Activated CD4-positive, alpha-beta T cell treated with anti-CD3 and anti-CD28 coated beads for 36 hours (primary cell): ENCODE measurements at regions of chr2 and their contacts with region 1.

Region 1: DNA sequence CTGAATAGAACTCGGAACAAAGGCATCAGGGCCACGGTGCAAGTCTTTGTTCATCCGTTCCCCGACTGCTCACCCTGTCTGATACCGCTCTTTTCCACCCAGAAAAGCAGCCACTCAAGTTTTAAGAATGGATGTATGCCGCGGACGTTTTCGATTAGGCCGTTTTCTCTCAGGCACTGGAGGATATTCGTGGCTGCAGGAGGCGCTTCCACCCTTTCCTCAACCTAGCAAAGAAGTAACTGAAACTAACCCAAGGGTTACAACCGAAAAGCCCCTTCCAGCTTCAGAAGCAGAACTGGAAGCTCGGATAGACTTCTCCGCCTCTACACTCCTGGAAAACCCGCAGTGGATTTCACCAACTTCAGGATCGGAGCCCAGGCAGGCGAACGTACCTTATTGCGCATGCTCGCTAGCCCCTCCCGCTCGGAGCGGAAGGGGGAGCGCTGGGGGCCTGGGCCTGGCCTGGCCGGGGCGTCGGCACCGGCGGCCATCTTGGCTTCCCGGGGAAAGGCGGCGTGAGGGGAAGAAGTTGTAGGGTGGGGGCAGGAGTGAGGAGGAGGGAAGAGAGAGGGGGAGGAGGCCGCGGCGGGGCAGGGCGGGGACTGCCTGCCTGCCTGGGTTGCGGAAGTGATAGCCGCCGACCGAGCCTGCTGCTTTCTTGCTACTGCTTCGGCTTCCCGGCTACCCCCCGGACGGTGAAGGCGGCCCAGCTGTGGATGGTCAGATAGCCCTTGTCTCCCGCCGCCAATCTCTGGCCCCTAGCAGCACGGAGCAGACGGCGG is at the start of gene ACTR3:
- DNase-seq: peak; percentile 99
- ATAC-seq: peak; percentile 79
- H3K4me3 Mint-ChIP-seq: peak within 1 kb of the TSS; percentile 94
- H3K27ac Mint-ChIP-seq: peak within 1 kb of the TSS; percentile 99
- H3K4me1 Mint-ChIP-seq: peaks cover 67% of the 10 kb centered on the region
- H3K27me3 Mint-ChIP-seq: no peaks in the 10 kb centered on the region
- total RNA-seq, gene ACTR3: 495 to 583 TPM

Region 2: DNA sequence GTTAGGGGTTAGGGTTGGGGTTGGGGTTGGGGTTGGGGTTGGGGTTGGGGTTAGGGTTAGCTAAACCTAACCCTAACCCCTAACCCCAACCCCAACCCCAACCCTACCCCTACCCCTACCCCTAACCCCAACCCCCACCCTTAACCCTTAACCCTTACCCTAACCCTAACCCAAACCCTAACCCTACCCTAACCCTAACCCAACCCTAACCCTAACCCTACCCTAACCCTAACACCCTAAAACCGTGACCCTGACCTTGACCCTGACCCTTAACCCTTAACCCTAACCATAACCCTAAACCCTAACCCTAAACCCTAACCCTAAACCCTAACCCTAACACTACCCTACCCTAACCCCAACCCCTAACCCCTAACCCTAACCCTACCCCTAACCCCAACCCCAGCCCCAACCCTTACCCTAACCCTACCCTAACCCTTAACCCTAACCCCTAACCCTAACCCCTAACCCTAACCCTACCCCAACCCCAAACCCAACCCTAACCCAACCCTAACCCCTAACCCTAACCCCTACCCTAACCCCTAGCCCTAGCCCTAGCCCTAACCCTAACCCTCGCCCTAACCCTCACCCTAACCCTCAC is 286.7 kb before region 1 on chr2:
- CTCF ChIA-PET with region 1: interaction called, 3 read pairs
- POLR2A ChIA-PET with region 1: no interaction called
- intact Hi-C with region 1: loop called in 1 of 2 experiments (anchors 10 kb)
- DNase-seq: peak; percentile 6
- ATAC-seq: peak; percentile 47
- H3K4me3 Mint-ChIP-seq: peak overlapping the region; percentile 82
- H3K27ac Mint-ChIP-seq: peak overlapping the region; percentile 90
- H3K4me1 Mint-ChIP-seq: peaks cover 7% of the 10 kb centered on the region
- H3K27me3 Mint-ChIP-seq: no peaks in the 10 kb centered on the region

Region 3: DNA sequence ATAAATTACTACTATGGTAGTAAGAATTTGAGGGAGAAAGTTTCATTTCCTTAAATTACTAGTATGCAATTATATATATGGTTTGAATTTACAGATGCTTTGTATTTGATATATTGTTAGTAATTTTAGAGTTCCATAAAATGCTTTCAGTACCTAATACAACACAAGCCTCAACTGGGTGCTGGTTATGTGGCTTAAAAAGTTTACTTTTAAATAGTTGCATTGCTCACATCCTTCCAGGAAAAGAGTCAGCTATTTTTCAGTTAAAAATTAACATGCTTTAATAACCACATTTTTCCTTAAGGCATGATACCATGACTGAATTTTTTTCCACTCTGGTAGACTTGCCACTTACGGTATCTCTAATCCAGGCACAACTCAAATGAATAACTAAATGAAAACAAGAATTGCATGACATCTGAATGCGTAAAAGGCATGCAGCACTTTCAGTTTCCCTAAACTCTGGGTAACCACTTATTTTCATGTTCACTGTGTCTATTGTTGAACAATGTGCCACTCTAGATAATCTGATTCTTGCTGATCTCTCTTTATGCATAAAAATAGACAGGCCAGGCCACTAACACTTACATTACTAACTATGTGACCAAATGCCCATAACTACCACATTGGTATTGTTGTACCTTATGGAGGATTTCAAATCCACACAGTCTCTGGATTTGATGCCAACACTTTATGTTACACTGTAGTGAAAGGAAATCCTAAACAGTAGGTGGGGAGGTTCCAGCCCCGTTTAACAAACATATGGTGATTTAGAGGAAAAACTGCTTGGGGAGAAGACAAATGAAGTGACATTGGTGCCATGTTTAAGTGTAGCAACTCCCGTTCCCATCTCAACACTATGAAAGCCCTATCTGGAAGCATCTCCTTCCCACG is 97.7 kb before region 1 on chr2:
- CTCF ChIA-PET with region 1: no interaction called
- POLR2A ChIA-PET with region 1: no interaction called
- intact Hi-C with region 1: loop called (anchors 1 to 2 kb)
- DNase-seq: peak; percentile 20
- ATAC-seq: peak; percentile 86
- H3K4me3 Mint-ChIP-seq: peak overlapping the region; percentile 4
- H3K27ac Mint-ChIP-seq: peak overlapping the region; percentile 89
- H3K4me1 Mint-ChIP-seq: peaks cover 34% of the 10 kb centered on the region
- H3K27me3 Mint-ChIP-seq: no peaks in the 10 kb centered on the region

Region 4: DNA sequence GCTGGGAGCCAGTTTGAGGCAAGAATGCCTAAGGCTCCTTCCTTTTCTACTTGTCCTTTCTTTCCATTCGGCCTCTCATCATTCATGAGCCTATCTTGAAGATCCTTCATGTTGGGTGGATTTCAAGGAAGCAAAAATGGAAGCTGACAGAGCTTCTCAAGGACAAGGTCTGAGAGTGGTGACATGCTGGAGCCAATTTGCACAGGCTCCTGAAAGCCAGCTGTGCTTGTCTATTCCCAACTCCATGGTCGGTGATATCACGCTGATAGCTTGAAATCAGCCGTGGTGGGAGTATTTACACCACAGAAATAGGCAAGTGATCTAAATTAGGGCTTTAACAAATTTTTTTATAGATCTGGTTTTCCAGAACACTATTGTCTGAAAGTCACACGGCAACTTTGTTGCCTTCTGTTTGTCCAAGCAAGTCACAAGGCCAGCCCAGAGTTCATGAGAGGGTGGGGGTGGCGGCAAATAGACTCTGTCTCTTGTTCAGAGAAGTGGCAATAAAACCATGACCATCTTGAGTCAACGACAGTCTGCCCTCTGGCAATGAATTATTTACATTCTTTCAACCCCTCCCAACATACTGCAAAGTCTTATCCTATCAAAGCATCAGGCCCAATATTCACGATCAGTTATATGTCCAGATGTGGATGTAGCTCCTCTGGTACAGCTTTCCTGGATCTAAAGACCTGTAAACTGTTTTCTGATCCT is 83.3 kb before region 1 on chr2:
- CTCF ChIA-PET with region 1: no interaction called
- POLR2A ChIA-PET with region 1: no interaction called
- intact Hi-C with region 1: no loop called
- DNase-seq: no peak
- ATAC-seq: no peak
- H3K4me3 Mint-ChIP-seq: no peak overlapping the region
- H3K27ac Mint-ChIP-seq: no peak overlapping the region
- H3K4me1 Mint-ChIP-seq: no peaks in the 10 kb centered on the region
- H3K27me3 Mint-ChIP-seq: no peaks in the 10 kb centered on the region

Region 5: DNA sequence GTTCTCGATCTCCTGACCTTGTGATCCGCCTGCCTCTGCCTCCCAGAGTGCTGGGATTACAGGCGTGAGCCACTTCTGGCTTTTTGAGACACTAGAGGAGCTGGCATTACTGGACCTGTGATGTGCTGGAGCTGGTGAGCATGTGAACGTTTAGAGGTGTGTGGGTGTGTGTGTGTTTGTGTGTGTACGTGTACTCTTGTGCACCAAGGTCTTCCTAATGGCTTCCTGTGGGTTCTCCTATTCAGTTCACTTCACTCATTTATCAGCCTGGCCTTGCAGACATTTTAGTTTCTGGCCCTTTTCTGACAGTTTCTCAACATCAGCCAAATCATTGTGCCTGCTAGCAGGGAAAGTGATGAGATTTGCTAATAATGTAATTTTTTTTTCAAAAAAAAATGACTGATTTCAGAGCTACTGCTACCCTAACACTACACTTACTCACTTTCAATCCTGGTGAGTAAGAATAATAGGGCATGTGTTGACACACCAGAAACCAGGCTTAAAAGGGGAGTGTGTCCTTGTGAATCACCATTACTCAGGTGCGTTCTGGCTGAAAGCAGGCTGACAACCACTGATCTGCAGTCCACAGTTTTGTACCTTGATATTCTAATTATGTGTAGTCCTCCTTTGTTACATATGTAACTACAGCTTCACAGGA is 40.8 kb before region 1 on chr2:
- CTCF ChIA-PET with region 1: interaction called, 3 read pairs
- POLR2A ChIA-PET with region 1: interaction called, 6 read pairs
- intact Hi-C with region 1: loop called (anchors 1 kb)
- DNase-seq: peak; percentile 66
- ATAC-seq: peak; percentile 99
- H3K4me3 Mint-ChIP-seq: no peak overlapping the region
- H3K27ac Mint-ChIP-seq: peak overlapping the region; percentile 85
- H3K4me1 Mint-ChIP-seq: peaks cover 16% of the 10 kb centered on the region
- H3K27me3 Mint-ChIP-seq: no peaks in the 10 kb centered on the region

Region 6: GRCh38 chr2:113876503-113877387 is 12.9 kb before region 1 on chr2:
- CTCF ChIA-PET with region 1: interaction called, 8 read pairs
- POLR2A ChIA-PET with region 1: interaction called, 16 read pairs
- intact Hi-C with region 1: loop called (anchors 1 kb)
- DNase-seq: peak; percentile 92
- ATAC-seq: peak; percentile 93
- H3K4me3 Mint-ChIP-seq: peak overlapping the region; percentile 27
- H3K27ac Mint-ChIP-seq: peak overlapping the region; percentile 79
- H3K4me1 Mint-ChIP-seq: peaks cover 43% of the 10 kb centered on the region
- H3K27me3 Mint-ChIP-seq: no peaks in the 10 kb centered on the region

Region 7: DNA sequence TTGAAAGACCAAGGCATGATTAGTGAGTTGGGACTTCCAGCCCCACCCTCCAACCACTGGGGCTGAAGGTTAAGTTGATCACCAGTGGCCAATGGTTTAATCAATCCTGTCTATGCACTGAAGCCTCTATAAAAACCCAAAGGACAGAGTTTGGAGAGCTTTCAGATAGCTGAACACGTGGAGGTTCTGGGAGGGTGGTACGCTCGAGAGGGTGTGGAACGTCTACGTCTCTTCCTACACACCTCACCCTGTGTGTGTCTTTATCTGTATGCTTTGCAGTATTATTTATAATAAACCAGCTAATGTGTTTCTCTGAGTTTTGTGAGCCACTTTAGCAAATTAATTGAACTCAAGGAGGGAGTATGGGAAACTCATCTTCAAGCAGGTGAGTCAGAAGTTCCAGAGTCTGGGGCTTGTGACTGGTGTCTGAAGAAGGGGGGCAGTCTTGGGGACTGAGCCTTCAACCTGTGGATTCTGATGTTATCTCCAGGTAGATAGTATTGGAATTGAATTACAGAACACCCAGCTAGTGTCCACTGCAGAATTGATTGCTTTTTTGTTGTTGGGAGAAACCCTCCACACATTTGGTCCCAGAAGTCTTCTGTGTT is 20.6 kb after region 1 on chr2:
- CTCF ChIA-PET with region 1: interaction called, 12 read pairs
- POLR2A ChIA-PET with region 1: interaction called, 4 read pairs
- intact Hi-C with region 1: loop called in 1 of 2 experiments (anchors 2 kb)
- DNase-seq: peak; percentile 87
- ATAC-seq: peak; percentile 88
- H3K4me3 Mint-ChIP-seq: peak overlapping the region; percentile 2
- H3K27ac Mint-ChIP-seq: peak overlapping the region; percentile 84
- H3K4me1 Mint-ChIP-seq: peaks cover 83% of the 10 kb centered on the region
- H3K27me3 Mint-ChIP-seq: no peaks in the 10 kb centered on the region

Region 8: DNA sequence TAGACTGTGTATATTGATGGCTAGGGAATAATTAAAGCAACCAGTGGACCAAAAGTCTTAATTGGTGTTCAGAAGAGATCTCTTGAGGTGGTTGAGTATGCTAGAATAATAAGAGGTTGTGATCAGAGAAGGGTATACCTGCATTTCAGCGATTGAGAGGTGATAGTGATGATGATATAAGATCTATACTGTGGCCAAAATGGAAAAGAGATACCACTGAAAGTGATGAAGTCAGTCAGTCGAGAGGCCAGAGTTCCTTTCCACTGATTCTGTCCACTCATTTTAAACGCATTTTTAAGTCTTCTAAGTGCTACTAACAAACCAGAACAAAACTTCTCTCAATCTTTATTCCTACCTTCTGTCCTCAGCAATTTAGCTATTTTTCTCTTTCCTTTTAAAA is 33.1 kb after region 1 on chr2:
- CTCF ChIA-PET with region 1: no interaction called
- POLR2A ChIA-PET with region 1: no interaction called
- intact Hi-C with region 1: loop called in 1 of 2 experiments (anchors 5 kb)
- DNase-seq: no peak
- ATAC-seq: no peak
- H3K4me3 Mint-ChIP-seq: no peak overlapping the region
- H3K27ac Mint-ChIP-seq: no peak overlapping the region
- H3K4me1 Mint-ChIP-seq: peaks cover 20% of the 10 kb centered on the region
- H3K27me3 Mint-ChIP-seq: no peaks in the 10 kb centered on the region

Region 9: DNA sequence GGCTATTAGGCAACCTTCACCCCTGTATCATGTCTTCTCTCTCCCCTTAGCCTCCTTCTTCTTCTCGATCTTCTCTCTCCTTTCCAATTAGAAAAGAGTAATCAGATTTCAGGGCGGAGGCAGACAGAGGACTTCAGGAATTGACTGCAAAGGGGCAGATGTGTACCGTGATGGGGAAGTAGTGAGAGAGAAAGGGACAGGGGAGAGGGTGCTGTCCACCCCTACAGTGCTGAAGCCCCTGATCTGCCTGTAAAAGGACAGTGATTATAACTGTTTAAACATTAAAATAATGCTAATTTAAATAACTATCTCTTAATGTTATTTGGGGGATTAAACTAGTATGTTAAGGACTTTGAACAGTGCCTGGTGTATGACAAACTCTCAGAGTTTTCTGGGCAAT is 178.8 kb after region 1 on chr2:
- CTCF ChIA-PET with region 1: no interaction called
- POLR2A ChIA-PET with region 1: no interaction called
- intact Hi-C with region 1: no loop called
- DNase-seq: peak; percentile 18
- ATAC-seq: no peak
- H3K4me3 Mint-ChIP-seq: no peak overlapping the region
- H3K27ac Mint-ChIP-seq: no peak overlapping the region
- H3K4me1 Mint-ChIP-seq: no peaks in the 10 kb centered on the region
- H3K27me3 Mint-ChIP-seq: peaks cover 12% of the 10 kb centered on the region

Region 10: GRCh38 chr2:114499101-114499500 is 609.4 kb after region 1 on chr2:
- CTCF ChIA-PET with region 1: no interaction called
- POLR2A ChIA-PET with region 1: no interaction called
- intact Hi-C with region 1: no loop called
- DNase-seq: no peak
- ATAC-seq: no peak
- H3K4me3 Mint-ChIP-seq: no peak overlapping the region
- H3K27ac Mint-ChIP-seq: no peak overlapping the region
- H3K4me1 Mint-ChIP-seq: no peaks in the 10 kb centered on the region
- H3K27me3 Mint-ChIP-seq: peaks cover 4% of the 10 kb centered on the region